CD8-positive, alpha-beta T cell (primary cell): ENCODE measurements at regions of chr10 and their contacts with region 1.

Region 1: DNA sequence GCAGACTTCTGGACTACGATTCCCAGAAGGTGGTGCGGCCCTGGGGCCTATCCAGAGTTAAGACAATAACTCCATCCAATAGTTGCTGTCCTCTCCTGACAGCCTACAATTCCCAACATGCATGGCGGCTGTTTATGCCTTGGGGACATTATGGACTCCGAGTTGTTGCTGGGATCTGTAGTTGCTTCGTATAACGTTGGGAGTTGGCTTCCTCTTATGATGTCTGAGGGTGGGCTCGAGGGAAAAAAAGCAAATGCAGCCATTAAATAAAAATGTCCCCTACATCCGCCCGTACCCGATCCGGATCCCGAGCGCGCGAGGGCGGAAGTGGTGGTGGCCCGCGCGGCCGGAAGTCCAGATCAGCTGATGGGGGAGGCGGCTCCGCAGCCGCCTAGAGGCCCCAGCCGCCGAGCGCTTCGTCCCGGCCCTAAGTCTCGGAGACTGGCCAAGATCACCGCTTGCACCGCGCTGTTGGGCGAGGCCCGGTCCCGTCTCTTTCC is at the start of gene ZSWIM8:
- DNase-seq: peak; percentile 70 to 96 (median 85)
- ATAC-seq: peak; percentile 84
- H3K4me3 ChIP-seq: peak within 1 kb of the TSS; percentile 68 to 81
- H3K4me3 Mint-ChIP-seq: peak within 1 kb of the TSS; percentile 99
- H3K27ac ChIP-seq: peak within 1 kb of the TSS; percentile 62 to 82
- H3K27ac Mint-ChIP-seq: peak within 1 kb of the TSS; percentile 95
- H3K4me1 ChIP-seq: peaks cover 41% of the 10 kb centered on the region
- H3K4me1 Mint-ChIP-seq: peaks cover 52% of the 10 kb centered on the region
- H3K27me3 ChIP-seq: no peaks in the 10 kb centered on the region
- H3K27me3 Mint-ChIP-seq: no peaks in the 10 kb centered on the region
- CTCF ChIP-seq: no peak
- total RNA-seq, gene ZSWIM8: 68.2 to 72.4 TPM

Region 2: DNA sequence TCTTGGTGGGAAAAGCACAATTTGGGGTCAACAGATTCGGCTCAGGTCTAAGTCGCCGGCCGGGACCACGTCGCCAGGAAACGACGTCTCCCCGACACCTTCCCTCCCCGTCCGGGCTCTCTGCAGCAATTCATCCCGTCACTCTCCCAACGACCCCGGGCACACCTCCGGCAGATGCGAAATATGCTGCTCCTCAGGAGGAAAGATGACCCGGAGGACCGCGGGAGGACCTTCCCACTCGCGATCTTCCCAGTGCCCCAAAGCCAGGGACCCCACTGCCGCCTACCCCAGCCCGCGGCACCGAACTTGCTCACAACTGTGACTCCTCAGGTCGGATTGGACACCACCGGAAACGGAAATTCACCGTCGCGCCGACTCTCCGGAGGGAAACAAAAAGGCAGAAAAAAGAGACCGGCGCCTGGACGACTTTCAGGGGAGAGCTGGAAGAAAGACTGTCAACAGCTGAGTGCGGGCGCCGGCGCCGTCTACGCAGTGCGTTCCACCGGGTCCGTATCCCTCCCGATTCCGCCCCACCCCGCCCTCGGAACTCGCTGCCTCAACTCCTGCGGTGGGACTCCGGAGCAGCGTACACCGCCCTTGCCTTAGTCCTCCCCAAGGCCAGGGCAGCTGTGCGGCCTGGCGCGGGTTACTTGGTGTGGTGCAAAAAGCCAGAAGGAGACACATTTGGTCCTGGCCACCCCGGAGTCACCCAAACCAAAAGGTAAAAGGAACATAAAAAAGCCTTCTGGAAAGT is 54.9 kb before region 1 on chr10:
- CTCF ChIA-PET with region 1: no interaction called
- POLR2A ChIA-PET with region 1: interaction called, 6 read pairs
- intact Hi-C with region 1: loop called in 1 of 2 experiments (anchors 1 kb)
- DNase-seq: peak; percentile 86 to 95 (median 89)
- ATAC-seq: peak; percentile 89
- H3K4me3 ChIP-seq: peak overlapping the region; percentile 98 to 100
- H3K4me3 Mint-ChIP-seq: peak overlapping the region; percentile 100
- H3K27ac ChIP-seq: peak overlapping the region; percentile 87 to 91
- H3K27ac Mint-ChIP-seq: peak overlapping the region; percentile 99
- H3K4me1 ChIP-seq: peaks cover 13% of the 10 kb centered on the region
- H3K4me1 Mint-ChIP-seq: peaks cover 29% of the 10 kb centered on the region
- H3K27me3 ChIP-seq: no peaks in the 10 kb centered on the region
- H3K27me3 Mint-ChIP-seq: no peaks in the 10 kb centered on the region
- CTCF ChIP-seq: no peak

Region 3: GRCh38 chr10:73765066-73765465 is 20.2 kb before region 1 on chr10:
- CTCF ChIA-PET with region 1: interaction called, 34 read pairs
- POLR2A ChIA-PET with region 1: interaction called, 95 read pairs
- intact Hi-C with region 1: no loop called
- DNase-seq: peak in 1 of 9 experiments; percentile 12
- ATAC-seq: no peak
- H3K4me3 ChIP-seq: no peak overlapping the region
- H3K4me3 Mint-ChIP-seq: no peak overlapping the region
- H3K27ac ChIP-seq: no peak overlapping the region
- H3K27ac Mint-ChIP-seq: no peak overlapping the region
- H3K4me1 ChIP-seq: peaks cover 18% of the 10 kb centered on the region
- H3K4me1 Mint-ChIP-seq: peaks cover 48% of the 10 kb centered on the region
- H3K27me3 ChIP-seq: no peaks in the 10 kb centered on the region
- H3K27me3 Mint-ChIP-seq: no peaks in the 10 kb centered on the region
- CTCF ChIP-seq: no peak

Region 4: GRCh38 chr10:73810735-73811465 is 25.6 kb after region 1 on chr10:
- CTCF ChIA-PET with region 1: interaction called, 3 read pairs
- POLR2A ChIA-PET with region 1: interaction called, 31 read pairs
- intact Hi-C with region 1: loop called (anchors 1 kb)
- DNase-seq: peak; percentile 19 to 79 (median 66)
- ATAC-seq: peak; percentile 12
- H3K4me3 ChIP-seq: peak overlapping the region; percentile 56 to 87
- H3K4me3 Mint-ChIP-seq: peak overlapping the region; percentile 89
- H3K27ac ChIP-seq: peak overlapping the region; percentile 71 to 91
- H3K27ac Mint-ChIP-seq: peak overlapping the region; percentile 95
- H3K4me1 ChIP-seq: peaks cover 48% of the 10 kb centered on the region
- H3K4me1 Mint-ChIP-seq: peaks cover 44% of the 10 kb centered on the region
- H3K27me3 ChIP-seq: no peaks in the 10 kb centered on the region
- H3K27me3 Mint-ChIP-seq: no peaks in the 10 kb centered on the region
- CTCF ChIP-seq: no peak